Activated B cell treated with CpG ODN at 0.5 μM for 24 hours (primary cell): ENCODE measurements at regions of chr4 and their contacts with region 1.

Region 1: DNA sequence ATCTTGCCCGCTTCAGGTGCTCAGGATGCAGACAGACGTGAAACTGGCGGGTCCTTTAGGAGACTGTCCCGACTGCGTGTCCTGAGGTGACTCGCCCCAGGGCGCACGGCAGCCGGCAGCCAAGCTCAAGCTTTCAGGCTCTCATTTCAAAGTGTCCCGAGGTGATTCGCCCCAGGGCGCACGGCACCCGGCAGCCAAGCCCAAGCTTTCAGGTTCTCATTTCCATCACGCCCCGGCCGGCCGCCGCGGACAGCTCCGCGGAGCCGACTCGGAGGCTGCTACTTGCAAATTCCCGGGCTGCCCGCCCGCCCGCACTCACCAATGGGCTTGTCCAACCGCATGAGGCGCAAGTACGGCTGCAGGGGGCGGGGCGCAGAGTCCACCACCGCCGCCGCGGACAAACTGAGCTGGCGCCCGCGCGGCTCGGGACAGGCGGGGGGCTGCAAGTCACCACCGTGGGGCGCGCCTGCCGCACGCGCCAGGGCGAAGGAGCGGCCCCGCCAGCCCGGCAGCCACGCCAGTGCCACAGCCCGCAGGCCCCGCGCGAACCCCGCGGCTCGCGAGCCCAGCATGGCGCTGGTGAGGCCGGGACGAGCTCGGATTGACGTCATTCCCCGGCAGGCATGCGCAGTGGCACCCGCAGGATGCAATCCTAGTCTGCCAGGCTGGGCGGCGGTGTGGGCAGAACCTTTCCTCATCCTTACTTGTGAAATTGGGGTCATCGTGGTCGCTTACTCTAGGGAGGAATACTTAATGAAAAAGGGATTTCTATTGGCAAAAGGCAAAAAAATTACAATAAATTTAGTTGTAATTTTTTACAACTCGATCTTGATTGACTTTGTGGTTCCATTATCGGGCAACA is at the start of gene COQ2:
- DNase-seq: peak; percentile 96
- ATAC-seq: peak; percentile 89
- H3K4me3 Mint-ChIP-seq: peak within 1 kb of the TSS; percentile 98
- H3K27ac Mint-ChIP-seq: peak within 1 kb of the TSS; percentile 99
- H3K4me1 Mint-ChIP-seq: peaks cover 35% of the 10 kb centered on the region
- H3K27me3 Mint-ChIP-seq: no peaks in the 10 kb centered on the region
- CTCF ChIP-seq: no peak
- total RNA-seq, gene COQ2: 15.2 and 18.8 TPM in 2 replicates

Region 2: GRCh38 chr4:82851885-82852750 is 432.3 kb before region 1 on chr4:
- CTCF ChIA-PET with region 1: interaction called, 3 read pairs
- POLR2A ChIA-PET with region 1: no interaction called
- intact Hi-C with region 1: loop called (anchors 1 kb)
- DNase-seq: no peak
- ATAC-seq: no peak
- H3K4me3 Mint-ChIP-seq: no peak overlapping the region
- H3K27ac Mint-ChIP-seq: no peak overlapping the region
- H3K4me1 Mint-ChIP-seq: no peaks in the 10 kb centered on the region
- H3K27me3 Mint-ChIP-seq: no peaks in the 10 kb centered on the region
- CTCF ChIP-seq: no peak

Region 3: GRCh38 chr4:83012687-83013419 is 271.6 kb before region 1 on chr4:
- CTCF ChIA-PET with region 1: interaction called, 5 read pairs
- POLR2A ChIA-PET with region 1: interaction called, 13 read pairs
- intact Hi-C with region 1: loop called (anchors 1 kb)
- DNase-seq: peak; percentile 97
- ATAC-seq: peak; percentile 92
- H3K4me3 Mint-ChIP-seq: peak overlapping the region; percentile 94
- H3K27ac Mint-ChIP-seq: peak overlapping the region; percentile 92
- H3K4me1 Mint-ChIP-seq: peaks cover 44% of the 10 kb centered on the region
- H3K27me3 Mint-ChIP-seq: no peaks in the 10 kb centered on the region
- CTCF ChIP-seq: no peak

Region 4: GRCh38 chr4:83083925-83084475 is 200.4 kb before region 1 on chr4:
- CTCF ChIA-PET with region 1: interaction called, 4 read pairs
- POLR2A ChIA-PET with region 1: interaction called, 12 read pairs
- intact Hi-C with region 1: no loop called
- DNase-seq: peak; percentile 33
- ATAC-seq: peak; percentile 96
- H3K4me3 Mint-ChIP-seq: peak overlapping the region; percentile 57
- H3K27ac Mint-ChIP-seq: peak overlapping the region; percentile 90
- H3K4me1 Mint-ChIP-seq: peaks cover 50% of the 10 kb centered on the region
- H3K27me3 Mint-ChIP-seq: no peaks in the 10 kb centered on the region
- CTCF ChIP-seq: no peak

Region 5: GRCh38 chr4:83259586-83259985 is 24.8 kb before region 1 on chr4:
- CTCF ChIA-PET with region 1: interaction called, 51 read pairs
- POLR2A ChIA-PET with region 1: interaction called, 8 read pairs
- intact Hi-C with region 1: loop called (anchors 1 kb)
- DNase-seq: no peak
- ATAC-seq: no peak
- H3K4me3 Mint-ChIP-seq: peak overlapping the region; percentile 3
- H3K27ac Mint-ChIP-seq: peak overlapping the region; percentile 37
- H3K4me1 Mint-ChIP-seq: peaks cover 53% of the 10 kb centered on the region
- H3K27me3 Mint-ChIP-seq: no peaks in the 10 kb centered on the region
- CTCF ChIP-seq: no peak

Region 6: DNA sequence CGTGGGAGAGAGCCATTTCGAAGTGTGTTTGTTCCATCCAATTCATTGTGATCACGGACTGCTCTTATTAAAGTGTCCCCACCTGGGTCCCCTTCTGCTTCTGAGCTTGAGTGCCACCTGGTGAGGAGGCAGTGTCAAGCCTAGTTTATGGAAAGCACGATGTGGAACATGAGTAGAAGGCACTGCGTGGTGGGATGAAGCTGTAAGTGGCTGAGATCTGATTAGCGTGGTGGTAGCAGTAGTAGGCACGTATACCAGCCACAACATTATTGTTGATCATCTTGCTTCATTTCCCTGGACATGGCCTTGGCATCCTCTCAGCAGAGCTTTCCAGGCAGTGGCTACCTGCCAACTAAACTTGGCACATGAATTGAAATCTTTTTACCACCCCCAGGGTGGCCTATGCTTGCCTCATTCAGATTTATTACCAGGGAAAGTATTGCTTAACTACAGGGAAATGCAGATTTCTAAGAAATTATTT is 297.9 kb after region 1 on chr4:
- CTCF ChIA-PET with region 1: no interaction called
- POLR2A ChIA-PET with region 1: interaction called, 5 read pairs
- intact Hi-C with region 1: loop called (anchors 1 kb)
- DNase-seq: peak; percentile 26
- ATAC-seq: peak; percentile 65
- H3K4me3 Mint-ChIP-seq: peak overlapping the region; percentile 75
- H3K27ac Mint-ChIP-seq: peak overlapping the region; percentile 83
- H3K4me1 Mint-ChIP-seq: peaks cover 21% of the 10 kb centered on the region
- H3K27me3 Mint-ChIP-seq: no peaks in the 10 kb centered on the region
- CTCF ChIP-seq: no peak